Right ventricle myocardium inferior (tissue), 1 donor: ENCODE measurements at regions of chr13 and their contacts with region 1.

Region 1: DNA sequence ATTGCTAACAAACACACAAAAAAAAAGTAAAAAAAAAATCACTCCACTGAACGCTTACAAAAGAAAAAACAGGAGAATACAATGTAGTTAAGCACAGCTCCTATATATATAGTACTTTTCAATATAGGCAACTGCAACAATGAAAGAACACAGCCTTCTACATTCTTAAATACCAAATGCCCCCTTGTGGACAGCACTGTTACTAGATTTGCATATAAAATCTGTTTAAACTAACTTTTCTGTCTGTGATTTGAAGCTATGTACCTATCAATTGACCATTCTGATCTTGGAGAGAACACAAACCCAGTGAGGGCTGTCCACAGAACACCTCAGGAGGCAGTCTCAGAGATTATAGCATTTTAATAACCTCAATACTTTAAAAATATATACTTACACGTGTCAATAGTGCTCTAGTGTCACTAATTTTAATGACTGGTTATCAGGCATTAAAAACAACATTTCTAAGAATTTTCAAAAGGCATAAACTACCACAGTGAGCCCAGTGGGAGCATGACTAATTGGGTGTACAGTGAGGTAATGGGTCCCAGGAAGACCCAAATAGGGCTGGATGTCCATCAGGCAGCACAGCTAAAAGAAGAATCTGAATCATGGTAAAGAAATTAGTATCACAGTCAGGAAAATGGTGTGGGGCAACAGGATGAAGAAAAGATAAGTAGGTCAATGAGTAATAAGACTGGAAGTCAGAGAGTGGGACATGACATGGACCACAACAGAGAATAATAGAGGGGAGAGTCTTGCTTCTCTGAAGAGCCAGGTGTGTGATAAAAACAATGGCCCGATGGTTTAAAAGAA is 22.2 kb downstream of the CCDC169 start:
- DNase-seq: no peak
- ATAC-seq: peak; percentile 52

Region 2: GRCh38 chr13:35978603-35979316 is 296.6 kb before region 1 on chr13:
- intact Hi-C with region 1: loop called (anchors 1 kb)
- DNase-seq: no peak
- ATAC-seq: peak; percentile 40

Region 3: DNA sequence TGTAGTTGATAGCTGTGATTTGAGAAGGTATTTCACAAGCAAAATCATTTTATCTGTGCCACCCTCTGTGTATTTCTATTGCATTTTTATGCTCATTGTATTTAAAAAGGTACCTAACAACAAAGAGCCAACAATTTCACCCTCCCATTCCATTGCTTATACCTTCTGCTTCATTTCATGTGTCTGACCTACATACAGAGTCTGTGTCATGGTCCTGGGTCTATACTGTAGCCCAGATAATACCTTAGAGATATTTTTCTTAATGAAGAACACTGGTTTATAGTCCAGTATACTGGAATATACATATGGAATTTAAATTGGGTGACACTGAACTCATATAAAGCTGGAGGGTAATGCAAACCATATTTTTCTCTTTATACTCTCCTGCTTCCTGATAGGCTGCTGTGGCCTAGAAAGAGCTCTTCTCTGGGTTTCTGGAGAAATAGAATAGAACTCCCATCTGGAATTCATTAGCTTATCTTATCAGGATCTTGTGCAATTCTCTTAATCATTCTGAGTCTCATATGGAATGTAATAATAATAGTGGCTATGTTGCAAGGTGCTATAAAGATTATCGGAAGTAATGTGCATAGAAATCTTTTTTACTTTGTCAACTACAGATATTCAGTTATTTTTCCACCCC is 102.6 kb after region 1 on chr13:
- intact Hi-C with region 1: no loop called
- DNase-seq: no peak
- ATAC-seq: no peak